Activated CD4-positive, alpha-beta memory T cell treated with anti-CD3 and anti-CD28 coated beads for 36 hours (primary cell): ENCODE measurements at regions of chr9 and their contacts with region 1.

Region 1: GRCh38 chr9:73081979-73082657 is 69.5 kb upstream of the ANXA1 start:
- DNase-seq: no peak
- H3K4me3 Mint-ChIP-seq: no peak overlapping the region
- H3K27ac Mint-ChIP-seq: no peak overlapping the region
- H3K4me1 Mint-ChIP-seq: no peaks in the 10 kb centered on the region
- H3K27me3 Mint-ChIP-seq: peaks cover 9% of the 10 kb centered on the region

Region 2: GRCh38 chr9:72856972-72857623 is 225.0 kb before region 1 on chr9:
- CTCF ChIA-PET with region 1: interaction called, 13 read pairs
- POLR2A ChIA-PET with region 1: no interaction called
- intact Hi-C with region 1: loop called (anchors 2 kb)
- DNase-seq: no peak
- H3K4me3 Mint-ChIP-seq: no peak overlapping the region
- H3K27ac Mint-ChIP-seq: no peak overlapping the region
- H3K4me1 Mint-ChIP-seq: no peaks in the 10 kb centered on the region
- H3K27me3 Mint-ChIP-seq: no peaks in the 10 kb centered on the region

Region 3: DNA sequence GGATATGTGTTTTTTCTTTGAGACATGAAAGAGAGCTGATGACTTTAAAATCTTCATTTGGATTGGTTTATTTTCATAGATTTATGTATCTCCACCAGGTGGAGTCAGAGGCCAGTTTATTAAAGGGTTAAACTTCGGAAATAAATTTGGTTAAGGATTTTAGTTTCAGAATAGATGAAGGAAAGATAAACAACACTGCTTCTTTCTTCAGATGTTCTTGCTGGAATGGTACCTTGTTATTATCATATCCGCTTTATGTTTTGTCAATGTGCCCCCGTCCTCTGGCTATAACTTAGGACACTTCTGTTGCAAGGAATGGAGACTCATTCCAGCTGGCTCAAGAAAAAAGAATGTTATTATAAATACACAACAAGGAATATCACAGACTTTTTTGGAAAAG is 210.4 kb before region 1 on chr9:
- CTCF ChIA-PET with region 1: no interaction called
- POLR2A ChIA-PET with region 1: no interaction called
- intact Hi-C with region 1: loop called (anchors 5 kb)
- DNase-seq: no peak
- H3K4me3 Mint-ChIP-seq: no peak overlapping the region
- H3K27ac Mint-ChIP-seq: no peak overlapping the region
- H3K4me1 Mint-ChIP-seq: no peaks in the 10 kb centered on the region
- H3K27me3 Mint-ChIP-seq: peaks cover 6% of the 10 kb centered on the region

Region 4: GRCh38 chr9:73067074-73067473 is 15.0 kb before region 1 on chr9:
- CTCF ChIA-PET with region 1: interaction called, 12 read pairs
- POLR2A ChIA-PET with region 1: no interaction called
- intact Hi-C with region 1: no loop called
- DNase-seq: no peak
- H3K4me3 Mint-ChIP-seq: no peak overlapping the region
- H3K27ac Mint-ChIP-seq: no peak overlapping the region
- H3K4me1 Mint-ChIP-seq: no peaks in the 10 kb centered on the region
- H3K27me3 Mint-ChIP-seq: peaks cover 11% of the 10 kb centered on the region